Heart right ventricle (tissue), 16 donors: ENCODE measurements at regions of chr17 and their contacts with region 1.

Region 1: GRCh38 chr17:39153599-39154051 is 2.2 kb upstream of the PLXDC1 start:
- DNase-seq: peak; percentile 92 to 95
- ATAC-seq: peak; percentile 72 to 95 (median 90)
- H3K4me3 ChIP-seq: peak overlapping the region; percentile 54 to 94 (median 81)
- H3K27ac ChIP-seq: peak overlapping the region; percentile 77 to 97 (median 91)
- H3K4me1 ChIP-seq: peaks cover 3 to 40% (median 17%) of the 10 kb centered on the region in 9 donors
- H3K27me3 ChIP-seq: peaks cover 0 to 37% (median 12%) of the 10 kb centered on the region in 7 donors
- CTCF ChIP-seq: peak in 7 of 9 donors; percentile 13 to 38 (median 24)

Region 2: DNA sequence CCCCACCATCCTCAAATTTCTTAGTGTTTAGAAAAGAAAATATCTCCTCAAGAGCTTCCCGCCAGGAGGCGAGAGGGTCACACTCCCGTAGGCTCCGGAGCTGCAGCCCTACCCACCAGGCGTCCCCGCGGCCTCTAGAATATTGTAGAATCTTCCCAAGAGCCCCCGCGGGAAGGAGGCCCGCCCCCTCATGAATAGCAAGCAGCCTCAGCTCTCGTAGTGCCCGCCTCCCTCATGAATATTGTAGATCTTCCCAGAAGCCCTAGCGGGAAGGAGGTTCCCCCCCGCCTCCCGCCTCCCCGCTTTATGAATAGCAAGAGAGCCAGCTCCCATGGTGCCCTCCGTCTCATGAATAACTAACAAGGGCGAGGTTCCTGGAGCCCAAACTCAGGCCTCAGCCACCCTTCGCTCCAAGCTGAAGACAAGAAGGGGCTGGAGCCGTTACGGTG is 186.3 kb before region 1 on chr17 and contains the start of gene FBXO47:
- intact Hi-C with region 1: loop called in 1 of 10 experiments (anchors 5 kb)
- DNase-seq: peak; percentile 92 to 97
- ATAC-seq: peak; percentile 97 to 100 (median 99)
- H3K4me3 ChIP-seq: peak within 1 kb of the TSS in 9 of 10 donors; percentile 4 to 52 (median 35)
- H3K27ac ChIP-seq: peak within 1 kb of the TSS; percentile 12 to 87 (median 72)
- H3K4me1 ChIP-seq: peaks cover 0 to 11% (median 0%) of the 10 kb centered on the region in 9 donors
- H3K27me3 ChIP-seq: no peaks in the 10 kb centered on the region
- CTCF ChIP-seq: peak in 6 of 9 donors; percentile 20 to 59 (median 36)
- total RNA-seq, gene FBXO47: not detected

Region 3: DNA sequence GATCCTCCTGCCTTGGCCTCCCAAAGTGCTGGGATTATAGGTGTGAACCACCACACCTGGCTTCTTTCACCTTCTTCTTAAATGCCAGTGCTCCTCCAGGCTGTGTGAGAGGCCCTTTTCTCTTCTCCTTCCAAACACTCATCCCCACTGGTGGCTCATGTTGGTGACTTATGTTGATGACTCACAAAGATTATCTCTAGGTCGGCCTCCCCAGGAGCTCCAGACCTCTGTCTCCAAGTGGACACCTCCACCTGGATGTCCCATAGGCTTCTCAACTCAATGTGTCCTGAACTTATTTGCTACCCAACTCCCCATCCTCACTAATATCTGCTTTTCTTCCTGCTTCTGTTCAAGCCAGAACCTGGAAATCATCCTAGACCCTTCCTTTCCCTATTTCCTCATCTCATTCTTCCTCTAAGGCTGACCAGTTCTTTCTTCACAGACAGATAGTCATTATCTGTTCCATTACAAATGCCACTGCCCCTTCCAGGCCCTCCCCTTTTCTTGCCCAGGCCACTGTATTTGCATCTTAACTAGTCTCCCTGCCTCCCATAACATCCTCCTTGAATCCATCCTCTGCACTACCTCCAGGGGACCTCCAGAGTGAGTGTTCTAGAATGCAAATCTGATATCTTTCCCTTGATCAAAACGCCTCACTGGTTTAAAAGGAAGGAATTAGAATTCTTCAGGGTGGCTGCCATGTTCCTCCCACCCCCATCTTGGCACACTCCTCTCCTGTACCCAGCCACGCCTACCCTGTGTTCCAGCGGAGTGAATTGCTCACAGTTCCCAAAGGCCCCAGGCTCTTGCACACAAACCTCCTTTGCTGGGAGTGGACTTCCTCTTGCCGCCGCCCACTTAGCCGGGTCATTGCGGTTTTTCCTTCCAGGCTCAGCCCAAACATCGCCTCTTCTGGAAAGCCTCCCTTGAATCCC is 151.7 kb before region 1 on chr17:
- intact Hi-C with region 1: loop called in 2 of 10 experiments (anchors 1 to 5 kb)
- DNase-seq: peak; percentile 82 to 91
- ATAC-seq: peak; percentile 92 to 95 (median 94)
- H3K4me3 ChIP-seq: peak overlapping the region in 8 of 10 donors; percentile 6 to 44 (median 30)
- H3K27ac ChIP-seq: peak overlapping the region; percentile 88 to 97 (median 93)
- H3K4me1 ChIP-seq: peaks cover 4 to 48% (median 30%) of the 10 kb centered on the region in 9 donors
- H3K27me3 ChIP-seq: no peaks in the 10 kb centered on the region
- CTCF ChIP-seq: peak in 2 of 9 donors; percentile 4 to 13

Region 4: DNA sequence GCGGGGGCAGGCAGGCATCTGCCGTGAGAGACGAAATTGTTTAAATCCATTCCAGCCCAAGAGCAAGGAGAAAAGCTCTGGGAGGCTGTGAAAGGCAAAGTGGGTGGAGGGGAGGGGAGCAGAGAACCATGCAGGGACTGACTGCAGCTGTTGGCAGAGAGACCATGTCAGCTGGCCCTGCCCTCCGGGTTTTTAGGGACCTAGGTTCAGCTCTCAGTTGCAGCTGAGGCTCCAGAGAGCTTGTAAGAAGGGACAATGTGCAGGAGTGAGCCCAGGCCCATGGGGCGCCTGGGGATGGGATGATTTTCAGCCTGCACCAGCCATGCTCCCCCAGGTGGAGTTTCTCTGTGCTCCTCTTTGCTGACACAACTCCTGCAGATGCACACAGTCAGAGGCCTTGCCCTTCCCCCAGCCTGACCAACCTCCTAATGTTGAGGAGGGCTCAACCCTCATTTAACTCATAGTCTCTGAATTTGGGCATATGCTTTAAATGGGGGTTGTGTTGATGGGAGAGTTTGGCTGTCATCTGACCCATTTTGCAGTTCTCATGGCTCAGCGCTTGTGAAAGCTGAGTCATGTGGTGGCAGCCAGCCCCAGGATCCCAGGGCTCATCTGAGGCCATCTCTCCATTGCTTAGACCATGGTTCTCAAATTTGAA is 73.1 kb before region 1 on chr17:
- intact Hi-C with region 1: loop called in 1 of 10 experiments (anchors 5 kb)
- DNase-seq: peak in 1 of 2 donors; percentile 56
- ATAC-seq: peak in 7 of 8 donors; percentile 33 to 66 (median 46)
- H3K4me3 ChIP-seq: no peak overlapping the region
- H3K27ac ChIP-seq: peak overlapping the region in 7 of 10 donors; percentile 15 to 91 (median 72)
- H3K4me1 ChIP-seq: peaks cover 11 to 55% (median 30%) of the 10 kb centered on the region in 9 donors
- H3K27me3 ChIP-seq: no peaks in the 10 kb centered on the region
- CTCF ChIP-seq: no peak

Region 5: GRCh38 chr17:39115135-39115534 is 38.5 kb before region 1 on chr17:
- intact Hi-C with region 1: no loop called
- DNase-seq: no peak
- ATAC-seq: no peak
- H3K4me3 ChIP-seq: no peak overlapping the region
- H3K27ac ChIP-seq: no peak overlapping the region
- H3K4me1 ChIP-seq: peaks cover 0 to 7% (median 0%) of the 10 kb centered on the region in 9 donors
- H3K27me3 ChIP-seq: peaks cover 0 to 10% (median 0%) of the 10 kb centered on the region in 7 donors
- CTCF ChIP-seq: no peak